T-cell (primary cell): ENCODE measurements at regions of chr6 and their contacts with region 1.

Region 1: DNA sequence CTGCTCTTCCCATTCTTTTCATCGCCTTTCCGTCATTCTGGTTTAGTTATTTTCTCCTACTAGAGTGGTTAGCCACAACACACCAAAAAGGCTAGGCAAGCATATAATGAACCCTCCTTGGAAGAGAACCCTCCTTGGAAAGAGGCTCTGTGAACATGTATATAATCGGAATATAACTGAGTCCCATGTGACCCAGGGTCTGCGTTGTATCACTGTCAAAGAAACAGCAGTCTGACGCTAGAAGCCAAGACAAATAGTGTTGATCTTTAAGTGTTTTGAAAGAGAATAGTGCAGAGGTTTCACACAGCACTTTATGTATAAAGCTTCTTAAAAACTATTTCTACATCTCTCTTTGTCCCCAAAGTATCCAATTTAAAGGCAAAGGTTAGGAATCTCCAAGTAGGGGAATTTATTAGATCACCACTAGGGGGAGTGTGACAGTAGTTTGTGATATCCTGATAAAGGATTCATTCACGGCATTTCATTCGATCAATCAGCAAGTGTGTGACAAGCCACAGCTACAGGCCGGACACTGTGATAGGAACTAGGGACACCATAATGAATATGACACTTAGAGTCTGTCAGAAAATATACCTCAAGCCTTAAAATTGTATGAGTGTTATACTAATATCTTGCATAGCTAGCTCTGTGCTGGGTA is 395.3 kb downstream of the CD109 start:
- DNase-seq: peak in 1 of 35 experiments; percentile 25
- ATAC-seq: no peak
- H3K4me3 ChIP-seq: no peak overlapping the region
- H3K4me3 Mint-ChIP-seq: no peak overlapping the region
- H3K27ac ChIP-seq: no peak overlapping the region
- H3K27ac Mint-ChIP-seq: no peak overlapping the region
- H3K4me1 ChIP-seq: no peaks in the 10 kb centered on the region
- H3K4me1 Mint-ChIP-seq: no peaks in the 10 kb centered on the region
- H3K27me3 ChIP-seq: no peaks in the 10 kb centered on the region
- H3K27me3 Mint-ChIP-seq: no peaks in the 10 kb centered on the region

Region 2: GRCh38 chr6:74103417-74103816 is 12.2 kb after region 1 on chr6:
- CTCF ChIA-PET with region 1: no interaction called
- POLR2A ChIA-PET with region 1: no interaction called
- DNase-seq: no peak
- ATAC-seq: no peak
- H3K4me3 ChIP-seq: no peak overlapping the region
- H3K4me3 Mint-ChIP-seq: no peak overlapping the region
- H3K27ac ChIP-seq: no peak overlapping the region
- H3K27ac Mint-ChIP-seq: no peak overlapping the region
- H3K4me1 ChIP-seq: no peaks in the 10 kb centered on the region
- H3K4me1 Mint-ChIP-seq: no peaks in the 10 kb centered on the region
- H3K27me3 ChIP-seq: no peaks in the 10 kb centered on the region
- H3K27me3 Mint-ChIP-seq: no peaks in the 10 kb centered on the region

Region 3: GRCh38 chr6:74152096-74152675 is 60.9 kb after region 1 on chr6:
- CTCF ChIA-PET with region 1: no interaction called
- POLR2A ChIA-PET with region 1: interaction called in 1 of 2 experiments, 10 read pairs
- DNase-seq: no peak
- ATAC-seq: no peak
- H3K4me3 ChIP-seq: no peak overlapping the region
- H3K4me3 Mint-ChIP-seq: no peak overlapping the region
- H3K27ac ChIP-seq: no peak overlapping the region
- H3K27ac Mint-ChIP-seq: no peak overlapping the region
- H3K4me1 ChIP-seq: no peaks in the 10 kb centered on the region
- H3K4me1 Mint-ChIP-seq: no peaks in the 10 kb centered on the region
- H3K27me3 ChIP-seq: no peaks in the 10 kb centered on the region
- H3K27me3 Mint-ChIP-seq: no peaks in the 10 kb centered on the region

Region 4: DNA sequence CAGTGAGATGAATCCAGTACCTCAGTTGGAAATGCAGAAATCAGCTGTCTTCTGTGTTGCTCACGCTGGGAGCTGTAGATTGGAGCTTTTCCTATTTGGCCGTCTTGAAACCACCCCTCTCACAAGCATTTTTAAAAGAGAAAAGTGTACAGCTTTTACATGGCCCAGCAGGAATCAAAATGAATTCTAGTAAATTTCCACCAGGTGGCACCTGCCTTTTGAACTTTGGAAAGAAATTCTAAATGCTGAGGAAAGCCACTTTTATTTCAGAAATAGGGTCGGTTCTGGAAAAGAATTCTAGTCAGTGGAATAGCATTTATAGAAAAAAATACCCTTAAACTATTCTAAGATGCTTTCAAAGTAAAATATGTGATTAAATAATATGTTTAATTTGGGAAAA is 252.5 kb after region 1 on chr6:
- CTCF ChIA-PET with region 1: no interaction called
- POLR2A ChIA-PET with region 1: no interaction called
- DNase-seq: no peak
- ATAC-seq: no peak
- H3K4me3 ChIP-seq: no peak overlapping the region
- H3K4me3 Mint-ChIP-seq: no peak overlapping the region
- H3K27ac ChIP-seq: no peak overlapping the region
- H3K27ac Mint-ChIP-seq: no peak overlapping the region
- H3K4me1 ChIP-seq: no peaks in the 10 kb centered on the region
- H3K4me1 Mint-ChIP-seq: no peaks in the 10 kb centered on the region
- H3K27me3 ChIP-seq: no peaks in the 10 kb centered on the region
- H3K27me3 Mint-ChIP-seq: no peaks in the 10 kb centered on the region